ENCODE measurements at regions of chr6 and their contacts with region 1.

Region 1: DNA sequence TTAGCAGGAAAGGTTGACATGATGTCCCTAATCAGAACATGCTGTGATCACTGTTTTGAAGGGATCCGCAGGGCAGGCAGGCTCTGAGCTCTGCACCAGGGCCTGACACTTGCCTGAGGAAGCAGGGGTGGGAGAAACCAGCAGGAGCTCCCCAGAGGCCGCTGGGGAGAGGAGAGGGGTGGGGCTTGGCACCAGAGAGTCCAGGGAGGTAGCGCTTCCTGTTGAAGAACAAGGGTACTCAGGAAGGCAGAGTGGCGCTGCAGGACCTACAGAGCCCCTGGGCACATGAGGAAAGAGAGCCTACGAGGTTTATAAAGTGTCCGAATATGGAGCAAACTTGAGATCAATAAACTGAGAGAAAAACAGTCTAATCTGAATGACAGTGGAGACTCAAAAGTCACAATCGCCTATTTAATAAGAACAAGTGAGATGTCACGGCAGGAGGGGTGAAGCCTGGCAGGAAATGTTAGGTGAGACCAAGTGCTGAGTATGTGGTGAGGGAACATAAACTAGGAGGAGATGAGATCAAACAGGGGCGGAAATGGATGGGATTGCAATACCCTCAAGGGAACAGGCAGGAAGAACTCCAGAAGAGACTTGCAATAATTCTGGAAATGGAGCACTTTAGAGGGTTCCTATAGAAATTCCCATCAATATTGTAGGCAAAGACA is 5.8 kb upstream of the TBXT start:
- DNase-seq: peak; percentile 68
- ATAC-seq: peak; percentile 40; the same call in 2 of the 3 replicates
- H3K4me3 ChIP-seq: peak overlapping the region; percentile 17; the same call in 1 of the 2 replicates
- H3K27ac ChIP-seq: peak overlapping the region; percentile 71
- H3K4me1 ChIP-seq: peaks cover 4% of the 10 kb centered on the region
- H3K27me3 ChIP-seq: peaks cover 3 to 10% of the 10 kb centered on the region in 2 experiments; a peak in 3 of 4 replicates
- CTCF ChIP-seq: no peak
- EP300 ChIP-seq: no peak
- POLR2A ChIP-seq: no peak
- RAD21 ChIP-seq: no peak

Region 2: GRCh38 chr6:165804331-165805066 is 368.9 kb before region 1 on chr6:
- CTCF ChIA-PET with region 1: no interaction called
- POLR2A ChIA-PET with region 1: no interaction called
- RAD21 ChIA-PET with region 1: no interaction called
- SMC1A ChIA-PET with region 1: no interaction called
- in situ Hi-C with region 1: no loop called
- intact Hi-C with region 1: no loop called
- DNase-seq: no peak
- ATAC-seq: no peak
- H3K4me3 ChIP-seq: no peak overlapping the region
- H3K27ac ChIP-seq: no peak overlapping the region
- H3K4me1 ChIP-seq: no peaks in the 10 kb centered on the region
- H3K27me3 ChIP-seq: no peaks in the 10 kb centered on the region; a peak in 1 of 4 replicates
- CTCF ChIP-seq: no peak
- EP300 ChIP-seq: no peak
- POLR2A ChIP-seq: no peak
- RAD21 ChIP-seq: no peak

Region 3: DNA sequence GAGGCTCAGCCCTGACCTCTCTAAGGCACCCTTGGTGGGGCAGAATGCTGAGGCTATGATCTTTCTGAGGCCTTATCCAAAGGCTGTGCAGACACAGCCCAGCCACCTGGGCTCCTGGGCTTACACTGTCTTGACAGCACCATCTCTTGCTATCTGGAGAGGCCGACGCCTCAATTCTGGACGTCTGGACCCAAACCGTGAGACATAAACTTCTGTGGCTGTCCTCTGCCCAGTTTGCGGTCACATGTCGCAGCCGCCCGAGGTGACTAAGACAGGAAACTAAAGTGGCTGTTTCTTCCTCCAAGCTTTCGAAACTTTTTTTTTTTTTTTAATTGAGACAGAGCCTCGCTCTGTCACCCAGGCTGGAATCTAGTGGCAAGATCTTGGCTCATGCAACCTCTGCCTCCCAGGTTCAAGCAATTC is 85.4 kb after region 1 on chr6:
- CTCF ChIA-PET with region 1: no interaction called
- POLR2A ChIA-PET with region 1: no interaction called
- RAD21 ChIA-PET with region 1: no interaction called
- SMC1A ChIA-PET with region 1: no interaction called
- in situ Hi-C with region 1: no loop called
- intact Hi-C with region 1: loop called (anchors 5 kb)
- DNase-seq: no peak
- ATAC-seq: peak; percentile 83
- H3K4me3 ChIP-seq: no peak overlapping the region
- H3K27ac ChIP-seq: no peak overlapping the region
- H3K4me1 ChIP-seq: peaks cover 14% of the 10 kb centered on the region
- H3K27me3 ChIP-seq: peaks cover 0 to 2% of the 10 kb centered on the region in 2 experiments; a peak in 1 of 4 replicates
- CTCF ChIP-seq: no peak
- EP300 ChIP-seq: no peak
- POLR2A ChIP-seq: no peak
- RAD21 ChIP-seq: no peak